Heart right ventricle (tissue), 16 donors: ENCODE measurements at regions of chr7 and their contacts with region 1.

Region 1: DNA sequence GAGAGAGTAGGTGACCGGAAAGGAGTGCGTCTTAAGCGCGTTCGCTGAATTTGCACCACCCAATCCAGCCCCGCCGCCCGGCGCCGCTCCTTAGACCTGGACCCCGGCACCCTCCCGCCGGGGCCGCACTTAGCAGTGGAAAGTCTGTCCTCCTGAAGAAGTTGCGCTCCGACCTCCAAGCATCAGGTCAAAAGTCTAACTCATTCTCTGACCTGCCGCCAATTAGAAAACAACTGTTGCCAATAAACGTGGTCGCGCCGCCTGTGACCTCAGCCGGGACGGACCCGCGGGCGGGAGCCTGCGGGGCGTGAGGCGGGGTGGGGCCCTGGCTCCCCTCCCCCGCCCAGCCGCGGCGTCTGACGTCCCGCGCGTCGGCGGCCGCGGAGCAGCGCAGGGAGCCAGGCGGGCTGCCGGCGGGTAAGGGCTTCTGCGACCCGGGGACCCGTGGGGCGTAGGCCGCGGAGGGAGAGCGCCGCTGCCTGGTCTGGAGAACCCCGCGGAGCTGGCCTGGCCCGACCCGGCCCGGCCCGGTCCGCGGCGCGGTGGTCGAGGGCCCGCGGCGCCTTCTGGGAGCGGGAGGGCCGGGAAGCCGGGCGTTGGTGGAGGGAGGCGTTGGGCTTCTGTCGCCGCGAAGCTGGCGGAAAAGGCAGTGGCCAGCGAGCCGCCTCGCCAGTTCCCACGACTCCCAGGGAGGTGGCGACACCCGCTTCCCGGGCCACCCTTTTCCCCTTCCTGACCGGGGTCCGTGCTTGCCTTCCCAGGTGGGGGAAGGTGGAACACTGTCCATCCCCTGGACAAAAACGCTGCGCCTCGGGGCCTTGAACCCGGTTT is at the start of gene BCAP29:
- DNase-seq: peak; percentile 83 to 84
- ATAC-seq: peak; percentile 93 to 98 (median 96)
- H3K4me3 ChIP-seq: peak within 1 kb of the TSS; percentile 56 to 90 (median 74)
- H3K27ac ChIP-seq: peak within 1 kb of the TSS; percentile 95 to 99 (median 98)
- H3K4me1 ChIP-seq: peaks cover 0 to 53% (median 31%) of the 10 kb centered on the region in 9 donors
- H3K27me3 ChIP-seq: no peaks in the 10 kb centered on the region
- CTCF ChIP-seq: peak; percentile 7 to 66 (median 42)
- total RNA-seq, gene BCAP29: 94.7 to 141 (median 118) TPM

Region 2: DNA sequence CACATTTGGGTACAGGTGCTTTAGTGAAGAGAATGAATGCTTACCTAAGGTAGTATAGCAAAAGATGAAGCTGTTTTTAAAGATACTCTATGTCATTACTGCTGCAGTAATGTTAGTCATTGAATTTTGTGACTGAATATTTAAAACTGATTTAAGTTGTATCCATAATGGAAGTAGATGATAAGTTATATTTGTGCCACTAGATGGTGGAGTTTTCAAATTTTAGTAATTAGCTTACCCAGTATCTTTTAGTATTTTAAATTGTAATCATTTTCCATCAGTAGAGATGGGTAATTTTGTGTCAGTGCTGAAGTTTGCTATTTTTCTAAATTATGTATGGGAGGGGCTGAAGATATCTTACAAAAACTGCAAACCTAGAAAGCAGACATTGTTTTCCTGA is 386.1 kb before region 1 on chr7:
- intact Hi-C with region 1: loop called in 1 of 10 experiments (anchors 10 kb)
- DNase-seq: no peak
- ATAC-seq: no peak
- H3K4me3 ChIP-seq: no peak overlapping the region
- H3K27ac ChIP-seq: peak overlapping the region in 4 of 10 donors; percentile 11 to 42 (median 14)
- H3K4me1 ChIP-seq: peaks cover 0 to 16% (median 9%) of the 10 kb centered on the region in 9 donors
- H3K27me3 ChIP-seq: no peaks in the 10 kb centered on the region
- CTCF ChIP-seq: peak in 4 of 9 donors; percentile 15 to 20 (median 19)

Region 3: GRCh38 chr7:107462740-107463444 is 117.2 kb before region 1 on chr7:
- intact Hi-C with region 1: loop called in 2 of 10 experiments (anchors 5 to 10 kb)
- DNase-seq: peak; percentile 46 to 61
- ATAC-seq: peak; percentile 75 to 96 (median 90)
- H3K4me3 ChIP-seq: no peak overlapping the region
- H3K27ac ChIP-seq: peak overlapping the region in 7 of 10 donors; percentile 8 to 65 (median 51)
- H3K4me1 ChIP-seq: peaks cover 0 to 39% (median 5%) of the 10 kb centered on the region in 9 donors
- H3K27me3 ChIP-seq: no peaks in the 10 kb centered on the region
- CTCF ChIP-seq: peak; percentile 54 to 91 (median 73)

Region 4: DNA sequence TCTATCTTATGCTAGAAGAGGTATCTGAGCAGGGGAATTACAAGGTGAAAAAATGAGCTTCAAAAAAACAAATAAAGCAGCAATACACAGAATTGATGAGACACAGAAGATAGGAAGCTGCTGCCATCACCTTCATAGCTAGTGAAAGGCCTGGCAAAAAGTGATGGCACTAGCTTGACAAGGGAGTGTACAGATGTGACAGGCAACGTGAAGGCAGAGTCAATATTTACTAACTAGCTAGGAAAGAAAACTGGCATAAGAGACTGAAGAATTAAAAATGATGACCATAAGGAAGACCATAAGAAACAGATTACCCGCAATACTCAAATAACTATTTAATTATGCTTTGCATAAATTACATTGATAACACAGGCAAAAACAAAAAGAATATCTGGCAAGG is 100.8 kb before region 1 on chr7:
- intact Hi-C with region 1: loop called in 3 of 10 experiments (anchors 5 to 10 kb)
- DNase-seq: no peak
- ATAC-seq: peak in 5 of 8 donors; percentile 44 to 71 (median 58)
- H3K4me3 ChIP-seq: peak overlapping the region in 8 of 10 donors; percentile 18 to 48 (median 34)
- H3K27ac ChIP-seq: peak overlapping the region in 9 of 10 donors; percentile 39 to 86 (median 79)
- H3K4me1 ChIP-seq: peaks cover 0 to 16% (median 0%) of the 10 kb centered on the region in 9 donors
- H3K27me3 ChIP-seq: no peaks in the 10 kb centered on the region
- CTCF ChIP-seq: no peak

Region 5: GRCh38 chr7:107594961-107595737 is 15.0 kb after region 1 on chr7:
- intact Hi-C with region 1: loop called in 3 of 10 experiments (anchors 2 kb)
- DNase-seq: peak in 1 of 2 donors; percentile 29
- ATAC-seq: peak; percentile 73 to 95 (median 92)
- H3K4me3 ChIP-seq: no peak overlapping the region
- H3K27ac ChIP-seq: peak overlapping the region; percentile 26 to 87 (median 70)
- H3K4me1 ChIP-seq: peaks cover 0 to 60% (median 40%) of the 10 kb centered on the region in 9 donors
- H3K27me3 ChIP-seq: no peaks in the 10 kb centered on the region
- CTCF ChIP-seq: no peak

Region 6: GRCh38 chr7:107614425-107614824 is 34.3 kb after region 1 on chr7:
- intact Hi-C with region 1: no loop called
- DNase-seq: no peak
- ATAC-seq: no peak
- H3K4me3 ChIP-seq: no peak overlapping the region
- H3K27ac ChIP-seq: peak overlapping the region in 1 of 10 donors; percentile 37
- H3K4me1 ChIP-seq: peaks cover 0 to 29% (median 12%) of the 10 kb centered on the region in 9 donors
- H3K27me3 ChIP-seq: no peaks in the 10 kb centered on the region
- CTCF ChIP-seq: no peak

Region 7: DNA sequence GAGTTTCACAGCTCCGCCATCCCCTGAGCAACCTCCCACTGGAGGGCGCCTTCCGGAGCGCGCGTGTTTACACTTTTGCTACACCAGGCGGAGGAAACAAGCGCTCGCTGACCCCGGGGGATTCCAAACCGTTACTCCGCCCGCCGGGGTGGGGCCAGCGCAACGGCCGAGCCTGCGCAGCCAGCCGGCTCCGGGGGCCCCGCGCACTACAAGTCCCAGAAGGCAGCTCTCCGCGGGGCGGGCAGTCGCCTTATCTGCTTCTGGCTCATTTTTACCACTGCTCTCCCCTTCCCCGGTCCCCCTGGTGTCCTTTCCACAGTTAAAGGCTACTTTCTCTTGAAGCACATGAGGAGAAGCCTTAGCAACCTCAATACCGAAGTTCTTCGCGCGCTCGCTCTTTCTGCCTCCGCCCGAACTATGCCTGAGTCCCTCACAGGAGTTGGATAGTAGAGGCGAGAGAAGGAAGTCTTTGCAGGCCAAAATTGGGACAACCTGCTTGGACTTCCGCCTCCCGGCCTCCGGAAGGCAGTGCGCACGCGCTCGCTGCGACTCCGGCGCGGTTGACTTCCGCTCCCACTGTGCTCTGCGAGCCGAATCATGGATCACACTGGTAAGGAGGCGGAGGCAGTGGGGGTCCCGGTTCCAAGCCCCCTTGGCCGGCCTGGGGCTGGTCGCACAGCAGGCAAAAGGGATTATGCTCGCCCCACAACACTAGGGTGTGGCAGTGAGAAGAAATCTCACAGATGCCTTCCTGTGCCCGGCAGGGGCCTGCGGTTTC is 163.7 kb after region 1 on chr7 and contains the start of gene CBLL1:
- intact Hi-C with region 1: loop called in 1 of 10 experiments (anchors 5 kb)
- DNase-seq: peak; percentile 97
- ATAC-seq: peak; percentile 98 to 99 (median 99)
- H3K4me3 ChIP-seq: peak within 1 kb of the TSS; percentile 52 to 97 (median 88)
- H3K27ac ChIP-seq: peak within 1 kb of the TSS; percentile 92 to 98 (median 96)
- H3K4me1 ChIP-seq: peaks cover 11 to 49% (median 46%) of the 10 kb centered on the region in 9 donors
- H3K27me3 ChIP-seq: no peaks in the 10 kb centered on the region
- CTCF ChIP-seq: peak; percentile 42 to 93 (median 73)
- total RNA-seq, gene CBLL1: 18.3 to 31.3 (median 23.1) TPM